ENCODE measurements at regions of chr3 and their contacts with region 1.

Region 1: DNA sequence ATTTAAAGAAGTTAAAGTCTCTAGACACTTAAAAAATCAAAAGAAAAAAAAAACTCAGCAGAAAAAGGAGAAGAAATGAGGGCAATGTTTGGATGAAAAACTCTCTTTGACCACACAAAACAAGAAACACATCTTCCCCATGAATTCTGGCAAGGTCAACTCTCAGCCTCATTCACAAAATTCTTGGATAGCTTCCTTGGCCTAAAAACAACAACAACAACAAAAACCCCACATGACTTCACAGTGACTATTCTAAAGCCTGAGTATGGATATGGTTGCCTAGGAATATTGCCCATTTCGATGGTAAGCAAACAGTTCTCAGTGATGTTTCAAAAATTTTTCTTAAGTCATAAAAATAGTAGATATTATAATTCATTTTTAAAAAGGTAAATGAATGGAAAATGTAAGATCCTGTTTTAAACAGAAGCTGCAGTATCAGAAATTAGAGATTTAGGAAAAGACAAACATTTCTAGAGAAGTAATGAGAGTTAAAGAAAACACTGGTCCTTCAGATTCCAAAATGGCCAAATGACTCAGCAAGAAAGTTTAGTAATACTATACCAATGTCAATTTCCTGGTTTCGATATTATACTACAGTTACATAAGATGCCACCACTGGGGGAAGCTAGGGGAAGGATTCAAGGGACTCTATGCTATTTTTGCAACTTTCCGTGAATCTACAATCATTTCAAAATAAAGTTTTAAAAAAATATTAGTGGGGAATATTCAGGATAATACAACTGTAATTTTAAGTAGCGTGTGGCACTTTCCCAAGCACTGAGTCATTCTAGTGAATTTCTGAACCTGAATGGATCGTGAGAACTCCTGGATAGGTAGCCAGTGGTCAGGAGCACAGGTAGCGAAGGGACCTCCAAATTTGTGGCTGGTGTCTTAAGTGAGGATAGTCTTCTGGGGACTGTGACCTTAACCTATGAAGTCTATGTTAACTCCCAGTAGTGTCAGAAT is 37.8 kb downstream of the TMCC1 start:
- DNase-seq: no peak
- ATAC-seq: no peak
- H3K4me3 ChIP-seq: no peak overlapping the region
- H3K4me3 Mint-ChIP-seq: no peak overlapping the region
- H3K27ac ChIP-seq: no peak overlapping the region
- H3K27ac Mint-ChIP-seq: peak overlapping the region; percentile 50 to 65
- H3K4me1 ChIP-seq: no peaks in the 10 kb centered on the region
- H3K4me1 Mint-ChIP-seq: peaks cover 14 to 26% (median 23%) of the 10 kb centered on the region in 3 donors
- H3K27me3 ChIP-seq: no peaks in the 10 kb centered on the region
- H3K27me3 Mint-ChIP-seq: no peaks in the 10 kb centered on the region

Region 2: DNA sequence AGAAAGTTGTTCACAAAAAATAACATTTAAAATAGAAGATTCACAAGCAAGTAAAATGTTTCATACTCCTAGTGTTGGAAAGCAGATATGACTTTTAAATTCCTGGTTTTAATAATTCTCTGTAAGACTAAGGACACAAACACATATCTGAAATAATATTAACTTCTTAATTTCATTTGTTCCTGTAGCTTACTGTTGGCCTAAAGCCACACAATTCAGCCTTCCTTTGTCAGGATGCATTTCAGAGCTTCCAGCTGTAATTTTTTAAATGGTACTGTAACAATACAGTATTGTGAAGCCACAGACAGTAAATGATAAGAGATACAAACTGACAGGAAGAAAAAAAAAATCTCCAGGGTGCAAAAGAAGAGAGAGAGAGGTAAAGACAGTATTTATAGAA is 46.4 kb before region 1 on chr3:
- CTCF ChIA-PET with region 1: no interaction called
- POLR2A ChIA-PET with region 1: no interaction called
- DNase-seq: no peak
- ATAC-seq: no peak
- H3K4me3 ChIP-seq: no peak overlapping the region
- H3K4me3 Mint-ChIP-seq: no peak overlapping the region
- H3K27ac ChIP-seq: no peak overlapping the region
- H3K27ac Mint-ChIP-seq: no peak overlapping the region
- H3K4me1 ChIP-seq: no peaks in the 10 kb centered on the region
- H3K4me1 Mint-ChIP-seq: peaks cover 21 to 36% (median 33%) of the 10 kb centered on the region in 3 donors
- H3K27me3 ChIP-seq: no peaks in the 10 kb centered on the region
- H3K27me3 Mint-ChIP-seq: no peaks in the 10 kb centered on the region

Region 3: GRCh38 chr3:129824926-129825541 is 30.7 kb before region 1 on chr3:
- CTCF ChIA-PET with region 1: no interaction called
- POLR2A ChIA-PET with region 1: no interaction called
- DNase-seq: peak in 29 of 35 experiments; percentile 5 to 76 (median 20)
- ATAC-seq: peak in 2 of 4 experiments; percentile 36 to 42
- H3K4me3 ChIP-seq: no peak overlapping the region
- H3K4me3 Mint-ChIP-seq: no peak overlapping the region
- H3K27ac ChIP-seq: no peak overlapping the region
- H3K27ac Mint-ChIP-seq: no peak overlapping the region
- H3K4me1 ChIP-seq: peaks cover 3 to 8% of the 10 kb centered on the region in 2 experiments
- H3K4me1 Mint-ChIP-seq: peaks cover 27 to 30% (median 28%) of the 10 kb centered on the region in 3 donors
- H3K27me3 ChIP-seq: no peaks in the 10 kb centered on the region
- H3K27me3 Mint-ChIP-seq: no peaks in the 10 kb centered on the region

Region 4: DNA sequence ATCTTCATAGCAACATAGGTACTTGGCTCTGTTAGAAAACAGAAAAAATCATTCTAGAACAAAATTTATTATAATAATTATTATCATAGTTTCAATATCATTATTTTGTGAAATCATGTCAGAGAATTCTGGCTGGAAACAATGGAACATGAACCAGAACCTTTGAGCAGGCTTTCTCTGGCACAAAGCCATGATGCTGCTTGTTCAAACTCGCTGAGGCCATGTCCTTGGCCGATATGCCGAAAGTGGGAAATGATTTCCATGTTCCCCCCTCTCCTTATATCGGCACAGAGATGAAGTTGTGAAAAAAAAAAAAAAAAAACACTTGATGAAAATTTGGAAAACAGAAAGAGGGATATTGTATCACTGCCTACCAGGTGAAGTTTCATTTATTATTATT is 1696.0 kb after region 1 on chr3:
- CTCF ChIA-PET with region 1: interaction called in 1 of 2 experiments, 11 read pairs
- POLR2A ChIA-PET with region 1: no interaction called
- DNase-seq: no peak
- ATAC-seq: no peak
- H3K4me3 ChIP-seq: no peak overlapping the region
- H3K4me3 Mint-ChIP-seq: no peak overlapping the region
- H3K27ac ChIP-seq: no peak overlapping the region
- H3K27ac Mint-ChIP-seq: no peak overlapping the region
- H3K4me1 ChIP-seq: no peaks in the 10 kb centered on the region
- H3K4me1 Mint-ChIP-seq: no peaks in the 10 kb centered on the region
- H3K27me3 ChIP-seq: no peaks in the 10 kb centered on the region
- H3K27me3 Mint-ChIP-seq: peaks cover 13 to 30% of the 10 kb centered on the region in 2 donors